AG04449 (cell line): ENCODE measurements at regions of chr1 and their contacts with region 1.

Region 1: DNA sequence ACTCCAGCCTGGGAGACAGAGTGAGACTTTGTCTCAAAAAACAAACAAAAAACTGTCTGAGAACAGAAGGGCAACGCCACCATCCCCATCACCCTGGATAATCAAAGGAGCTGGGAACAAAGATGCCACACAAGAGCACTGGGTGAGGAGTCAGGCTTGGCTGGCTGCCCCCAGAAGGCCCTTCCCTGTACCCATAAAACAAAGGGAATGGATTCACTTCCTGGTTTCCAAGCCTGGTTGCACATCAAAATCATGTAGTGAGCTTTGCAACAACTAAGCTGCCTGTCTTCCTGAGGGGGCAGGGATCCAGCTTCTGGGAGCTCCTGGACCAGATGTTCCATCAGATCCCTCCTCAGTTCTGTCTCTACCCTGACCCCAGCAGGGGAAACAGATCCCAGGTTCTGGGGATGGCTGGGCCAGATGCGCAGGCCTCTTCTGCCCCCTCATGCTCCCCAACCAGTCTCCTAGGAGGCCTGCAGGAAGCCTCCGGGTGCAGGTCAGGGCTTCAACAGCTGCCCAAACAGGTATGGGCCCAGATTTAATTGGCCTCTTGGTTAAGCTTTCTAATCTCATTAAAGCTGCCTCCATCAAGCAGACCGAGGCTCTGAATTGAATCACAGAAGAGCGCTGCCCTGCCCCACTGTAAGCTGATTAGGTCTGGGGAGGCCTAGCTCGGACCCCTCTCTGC is 97.8 kb downstream of the MRPL37 start:
- DNase-seq: no peak
- H3K4me3 ChIP-seq: no peak overlapping the region
- CTCF ChIP-seq: no peak

Region 2: GRCh38 chr1:54310439-54311328 is 12.9 kb after region 1 on chr1:
- CTCF ChIA-PET with region 1: interaction called, 19 read pairs
- POLR2A ChIA-PET with region 1: no interaction called
- DNase-seq: no peak
- H3K4me3 ChIP-seq: no peak overlapping the region
- CTCF ChIP-seq: peak; percentile 60